Activated CD8-positive, alpha-beta T cell treated with anti-CD3 and anti-CD28 coated beads for 36 hours (primary cell): ENCODE measurements at regions of chr9 and their contacts with region 1.

Region 1: DNA sequence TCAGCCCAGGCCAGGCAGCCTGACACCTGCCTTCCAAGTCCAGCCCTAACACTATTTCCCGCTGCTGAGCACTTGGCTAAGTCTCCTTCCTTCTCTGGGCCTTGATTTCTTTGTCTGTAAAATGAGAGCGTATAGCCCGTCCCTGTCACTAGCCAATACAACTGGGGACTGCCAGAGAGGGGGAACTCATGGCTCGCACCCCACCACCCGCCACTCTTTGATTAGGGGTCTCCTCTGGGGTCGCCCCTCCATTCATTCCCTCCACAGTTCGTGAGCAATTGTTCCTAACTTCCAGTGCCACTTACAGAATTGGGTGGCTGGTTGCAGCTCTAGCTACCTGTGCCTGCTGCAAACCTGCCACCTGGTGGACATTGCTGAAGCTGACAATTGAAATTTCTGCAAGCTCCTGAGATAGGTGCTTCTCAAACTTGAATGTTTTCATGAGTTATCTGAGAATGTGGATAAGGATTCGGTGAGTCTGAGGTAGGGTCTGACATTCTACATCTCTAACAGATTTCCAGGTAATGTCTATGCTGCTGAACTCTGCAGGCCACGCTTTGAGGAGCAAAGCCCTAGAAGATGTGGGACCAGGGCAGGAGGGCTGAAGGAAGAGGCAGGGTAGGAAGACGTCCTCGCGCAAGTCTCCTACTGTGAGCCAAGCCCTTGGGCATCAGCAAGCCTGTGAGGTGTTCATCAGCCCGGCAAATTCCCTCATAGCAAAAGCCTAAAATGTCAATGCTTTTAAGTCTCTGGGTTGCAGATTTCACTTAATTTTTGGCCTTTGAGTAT is 13.3 kb upstream of the RECK start:
- DNase-seq: peak; percentile 78
- ATAC-seq: peak; percentile 75
- H3K4me3 Mint-ChIP-seq: no peak overlapping the region
- H3K27ac Mint-ChIP-seq: no peak overlapping the region
- H3K4me1 Mint-ChIP-seq: no peaks in the 10 kb centered on the region
- H3K27me3 Mint-ChIP-seq: no peaks in the 10 kb centered on the region
- CTCF ChIP-seq: peak; percentile 89

Region 2: DNA sequence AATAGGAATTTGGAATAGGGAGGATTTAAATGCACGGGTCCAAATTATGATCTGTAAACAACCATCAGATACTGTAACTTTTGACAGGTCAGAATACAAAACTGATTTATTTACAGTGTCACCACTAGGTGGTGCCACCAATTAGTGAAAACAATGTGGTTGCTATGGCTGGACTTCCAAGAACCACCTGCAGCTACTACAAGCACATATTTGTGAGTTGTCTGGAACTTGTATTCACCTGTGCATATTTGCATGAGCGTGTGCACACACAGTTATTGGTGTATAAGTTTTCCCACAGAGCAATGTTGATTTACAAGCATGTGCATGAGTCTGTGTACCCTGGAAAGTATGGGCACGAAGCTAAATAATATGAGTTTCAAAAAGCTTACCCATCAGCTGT is 120.4 kb before region 1 on chr9:
- CTCF ChIA-PET with region 1: interaction called, 17 read pairs
- POLR2A ChIA-PET with region 1: no interaction called
- intact Hi-C with region 1: no loop called
- DNase-seq: peak; percentile 35
- ATAC-seq: peak; percentile 67
- H3K4me3 Mint-ChIP-seq: no peak overlapping the region
- H3K27ac Mint-ChIP-seq: no peak overlapping the region
- H3K4me1 Mint-ChIP-seq: peaks cover 9% of the 10 kb centered on the region
- H3K27me3 Mint-ChIP-seq: peaks cover 3% of the 10 kb centered on the region
- CTCF ChIP-seq: peak; percentile 93

Region 3: DNA sequence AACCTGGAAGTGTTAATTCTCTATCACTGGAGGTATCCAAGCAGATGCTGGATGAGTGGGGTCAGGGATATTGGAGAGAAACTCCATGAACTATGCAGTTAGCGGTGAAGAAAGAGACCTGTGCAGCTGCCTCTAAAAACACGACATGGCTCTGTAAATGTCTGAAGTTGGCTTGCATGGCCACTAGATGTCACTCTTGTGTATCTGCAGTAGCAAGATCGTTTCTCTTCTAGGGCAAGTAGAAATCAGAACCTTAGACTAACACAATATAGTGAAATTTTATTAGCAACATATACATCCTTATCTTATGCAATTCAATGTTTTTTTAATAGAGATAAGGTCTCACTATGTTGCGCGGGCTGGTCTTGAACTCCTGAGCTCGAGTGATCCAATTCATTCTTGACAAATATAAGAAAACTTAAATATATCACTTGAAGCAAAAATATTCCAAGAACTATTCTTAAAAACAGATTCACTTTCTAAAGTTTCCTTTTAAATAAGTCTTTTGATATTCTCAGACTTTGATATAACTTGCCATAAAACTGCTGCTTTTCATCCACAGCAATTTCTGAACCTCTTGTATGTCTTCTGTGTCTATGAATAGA is 68.4 kb before region 1 on chr9:
- CTCF ChIA-PET with region 1: interaction called, 59 read pairs
- POLR2A ChIA-PET with region 1: no interaction called
- intact Hi-C with region 1: loop called (anchors 5 kb)
- DNase-seq: peak; percentile 67
- ATAC-seq: peak; percentile 80
- H3K4me3 Mint-ChIP-seq: no peak overlapping the region
- H3K27ac Mint-ChIP-seq: no peak overlapping the region
- H3K4me1 Mint-ChIP-seq: no peaks in the 10 kb centered on the region
- H3K27me3 Mint-ChIP-seq: peaks cover 4% of the 10 kb centered on the region
- CTCF ChIP-seq: peak; percentile 79

Region 4: GRCh38 chr9:36036780-36037548 is 13.5 kb after region 1 on chr9 and contains the start of gene RECK:
- CTCF ChIA-PET with region 1: interaction called, 47 read pairs
- POLR2A ChIA-PET with region 1: interaction called, 3 read pairs
- intact Hi-C with region 1: no loop called
- DNase-seq: peak; percentile 94
- ATAC-seq: peak; percentile 97
- H3K4me3 Mint-ChIP-seq: peak within 1 kb of the TSS; percentile 81
- H3K27ac Mint-ChIP-seq: peak within 1 kb of the TSS; percentile 69
- H3K4me1 Mint-ChIP-seq: peaks cover 37% of the 10 kb centered on the region
- H3K27me3 Mint-ChIP-seq: no peaks in the 10 kb centered on the region
- CTCF ChIP-seq: no peak
- total RNA-seq, gene RECK: 5.3 to 6.5 TPM

Region 5: DNA sequence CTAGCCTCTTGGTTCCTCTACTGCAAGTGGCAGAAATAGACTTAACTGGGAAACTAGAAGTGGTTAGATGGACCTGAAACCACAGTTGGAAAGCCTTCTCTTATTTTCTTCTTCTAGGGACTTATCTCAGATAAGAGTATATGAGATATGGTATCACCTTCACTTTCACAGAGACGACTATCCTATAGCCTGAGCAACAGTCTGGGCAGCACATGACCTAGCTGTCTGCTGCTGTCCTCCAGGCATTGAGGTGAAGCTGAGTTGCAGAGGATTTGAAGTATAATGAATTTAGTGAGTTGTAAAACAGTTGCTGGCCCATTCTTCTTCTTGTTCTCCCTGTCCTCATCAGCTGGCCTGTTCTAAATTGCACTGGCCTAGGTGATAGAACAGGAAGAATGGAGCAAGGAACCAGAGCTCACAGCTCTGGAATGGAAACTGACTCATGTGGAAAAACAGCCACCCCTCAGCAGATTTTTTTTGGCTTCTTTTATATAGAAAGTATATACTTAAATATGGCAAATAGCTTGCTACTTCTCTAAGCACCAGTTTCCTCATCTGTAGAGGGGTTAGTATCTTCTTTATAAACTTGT is 41.1 kb after region 1 on chr9:
- CTCF ChIA-PET with region 1: no interaction called
- POLR2A ChIA-PET with region 1: no interaction called
- intact Hi-C with region 1: no loop called
- DNase-seq: no peak
- ATAC-seq: no peak
- H3K4me3 Mint-ChIP-seq: no peak overlapping the region
- H3K27ac Mint-ChIP-seq: no peak overlapping the region
- H3K4me1 Mint-ChIP-seq: peaks cover 3% of the 10 kb centered on the region
- H3K27me3 Mint-ChIP-seq: no peaks in the 10 kb centered on the region
- CTCF ChIP-seq: no peak

Region 6: DNA sequence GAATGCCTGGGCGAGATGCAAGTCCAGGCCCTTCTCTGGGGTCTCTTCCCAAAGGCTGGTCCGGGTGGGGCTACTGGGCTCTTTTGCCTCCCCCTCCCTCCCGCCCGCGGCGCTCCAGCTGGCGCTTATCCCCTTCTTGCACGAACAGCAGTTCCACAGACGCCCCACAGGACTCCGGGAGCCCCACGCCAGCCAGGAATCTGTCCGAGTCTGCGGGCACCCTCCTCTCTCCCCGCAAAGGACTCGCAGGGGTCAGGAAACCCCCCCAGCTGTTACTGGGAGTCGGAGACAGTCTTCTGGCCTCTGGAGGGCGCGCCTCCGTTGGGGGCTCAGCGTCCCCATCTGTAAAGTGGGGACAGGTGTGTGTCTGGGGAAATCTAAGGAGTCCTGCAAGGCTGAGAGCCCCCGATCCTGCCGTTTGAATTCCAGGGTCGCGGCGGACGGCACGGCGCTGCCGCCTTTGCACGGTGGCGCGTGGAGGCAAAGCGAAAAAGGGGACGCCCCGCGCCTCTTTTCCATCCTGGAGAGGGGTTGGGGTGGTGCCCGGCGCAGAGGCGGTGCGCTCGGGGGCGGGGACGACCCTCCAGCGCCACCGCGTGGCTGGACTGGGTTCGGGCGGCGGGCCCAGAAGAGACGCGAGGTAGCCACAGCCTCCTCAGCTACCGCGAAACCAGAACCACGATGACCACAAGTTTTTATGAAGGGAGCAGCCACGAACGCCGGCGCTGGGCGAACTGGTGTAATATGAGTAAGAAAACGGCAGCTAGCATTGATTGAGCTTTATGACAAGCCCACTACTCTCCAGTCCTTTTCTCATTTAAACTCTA is 142.9 kb after region 1 on chr9:
- CTCF ChIA-PET with region 1: interaction called, 10 read pairs
- POLR2A ChIA-PET with region 1: no interaction called
- intact Hi-C with region 1: no loop called
- DNase-seq: peak; percentile 85
- ATAC-seq: peak; percentile 97
- H3K4me3 Mint-ChIP-seq: peak overlapping the region; percentile 70
- H3K27ac Mint-ChIP-seq: no peak overlapping the region
- H3K4me1 Mint-ChIP-seq: peaks cover 3% of the 10 kb centered on the region
- H3K27me3 Mint-ChIP-seq: no peaks in the 10 kb centered on the region
- CTCF ChIP-seq: peak; percentile 95